ENCODE measurements at regions of chr17 and their contacts with region 1.

Region 1: GRCh38 chr17:35170968-35171771 is 23.0 kb downstream of the SLC35G3 start:
- DNase-seq: no peak
- ATAC-seq: no peak

Region 2: GRCh38 chr17:34998205-34998604 is 173.0 kb before region 1 on chr17:
- intact Hi-C with region 1: no loop called
- DNase-seq: peak; percentile 84
- ATAC-seq: peak; percentile 86

Region 3: DNA sequence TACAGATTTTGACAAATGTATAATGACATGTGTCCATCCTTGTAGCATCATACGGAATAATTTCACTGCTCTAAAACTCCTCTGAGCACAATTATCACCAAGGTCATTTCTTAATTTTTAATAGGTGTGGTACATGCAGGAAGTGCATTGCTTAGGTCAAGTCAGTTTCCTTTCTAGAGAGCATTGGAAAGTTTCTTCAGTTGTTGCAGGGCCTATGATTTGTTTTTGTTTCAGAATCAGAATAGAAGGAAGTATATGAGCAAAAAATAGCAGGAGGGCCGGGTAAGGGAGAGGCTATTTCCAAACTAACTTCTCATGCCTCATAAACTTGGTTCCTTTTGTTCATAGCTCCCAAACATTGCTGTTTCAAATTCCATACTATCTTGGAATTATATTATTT is 47.7 kb after region 1 on chr17:
- intact Hi-C with region 1: no loop called
- DNase-seq: no peak
- ATAC-seq: no peak

Region 4: DNA sequence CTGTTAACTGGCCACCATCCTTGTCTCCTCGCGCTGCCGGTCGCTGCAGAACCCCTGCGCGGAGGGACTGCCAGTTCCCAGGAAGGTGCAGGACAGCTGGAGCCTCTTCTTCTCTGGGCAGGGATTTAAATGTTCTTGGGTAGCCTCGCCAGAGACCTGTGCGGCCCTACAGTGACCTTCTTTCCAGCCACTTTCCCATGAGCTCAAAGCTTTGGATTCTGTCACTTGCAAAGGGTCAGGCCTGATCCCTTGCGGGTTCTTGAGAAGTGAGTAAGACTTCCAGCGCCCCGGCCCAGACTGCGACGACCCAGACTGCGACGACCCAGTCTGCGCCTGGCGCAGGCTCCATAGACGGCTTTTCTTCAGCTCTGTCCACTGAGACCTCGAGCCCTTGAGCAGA is 70.3 kb after region 1 on chr17:
- intact Hi-C with region 1: loop called (anchors 2 kb)
- DNase-seq: peak; percentile 42
- ATAC-seq: no peak

Region 5: GRCh38 chr17:35540589-35541404 is 369.6 kb after region 1 on chr17:
- intact Hi-C with region 1: loop called (anchors 5 kb)
- DNase-seq: peak; percentile 53
- ATAC-seq: peak; percentile 48

Region 6: DNA sequence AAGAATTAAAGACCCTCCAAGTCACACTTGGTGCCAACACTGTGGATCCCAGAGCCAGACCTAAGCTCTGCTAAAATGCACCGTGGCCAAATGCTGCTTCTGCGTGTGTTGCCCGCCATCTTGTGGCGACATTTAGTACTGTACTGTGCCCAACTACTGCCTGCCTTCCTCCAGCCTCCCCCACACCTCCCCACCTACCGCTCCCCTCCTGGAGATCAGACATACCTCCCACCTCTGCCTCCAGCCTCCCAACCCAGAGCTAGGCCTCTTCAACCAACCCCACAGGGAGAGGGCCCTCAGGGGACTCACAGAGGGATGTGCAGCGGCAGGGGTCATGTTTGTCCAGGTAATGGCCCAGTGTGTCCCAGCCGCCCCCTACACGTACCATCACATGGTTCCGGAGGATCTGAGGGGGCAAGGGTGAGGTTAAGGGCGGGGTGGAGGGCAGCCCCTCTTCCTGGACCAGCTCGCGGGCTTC is 576.4 kb after region 1 on chr17:
- intact Hi-C with region 1: loop called (anchors 5 kb)
- DNase-seq: peak; percentile 78
- ATAC-seq: peak; percentile 88

Measured in Right ventricle myocardium superior (tissue), 1 donor.